Activated CD4-positive, alpha-beta memory T cell treated with anti-CD3 and anti-CD28 coated beads, Interleukin-2, amount 10 ng/mL, durations not matched to agents 7 days and 5 days (primary cell): ENCODE measurements at regions of chr15 and their contacts with region 1.

Region 1: GRCh38 chr15:82849556-82850512 is 40.4 kb downstream of the WHAMM start:
- DNase-seq: peak; percentile 58
- H3K4me3 Mint-ChIP-seq: no peak overlapping the region
- H3K27ac Mint-ChIP-seq: no peak overlapping the region
- H3K4me1 Mint-ChIP-seq: peaks cover 6% of the 10 kb centered on the region
- H3K27me3 Mint-ChIP-seq: peaks cover 5% of the 10 kb centered on the region

Region 2: GRCh38 chr15:82832601-82833361 is 17.1 kb before region 1 on chr15:
- CTCF ChIA-PET with region 1: interaction called, 10 read pairs
- POLR2A ChIA-PET with region 1: interaction called, 3 read pairs
- DNase-seq: peak; percentile 46
- H3K4me3 Mint-ChIP-seq: no peak overlapping the region
- H3K27ac Mint-ChIP-seq: peak overlapping the region; percentile 71
- H3K4me1 Mint-ChIP-seq: peaks cover 44% of the 10 kb centered on the region
- H3K27me3 Mint-ChIP-seq: no peaks in the 10 kb centered on the region